Activated naive CD8-positive, alpha-beta T cell treated with anti-CD3 and anti-CD28 coated beads, Interleukin-2, amount 10 ng/mL, durations not matched to agents 7 days and 5 days (primary cell): ENCODE measurements at regions of chr16 and their contacts with region 1.

Region 1: DNA sequence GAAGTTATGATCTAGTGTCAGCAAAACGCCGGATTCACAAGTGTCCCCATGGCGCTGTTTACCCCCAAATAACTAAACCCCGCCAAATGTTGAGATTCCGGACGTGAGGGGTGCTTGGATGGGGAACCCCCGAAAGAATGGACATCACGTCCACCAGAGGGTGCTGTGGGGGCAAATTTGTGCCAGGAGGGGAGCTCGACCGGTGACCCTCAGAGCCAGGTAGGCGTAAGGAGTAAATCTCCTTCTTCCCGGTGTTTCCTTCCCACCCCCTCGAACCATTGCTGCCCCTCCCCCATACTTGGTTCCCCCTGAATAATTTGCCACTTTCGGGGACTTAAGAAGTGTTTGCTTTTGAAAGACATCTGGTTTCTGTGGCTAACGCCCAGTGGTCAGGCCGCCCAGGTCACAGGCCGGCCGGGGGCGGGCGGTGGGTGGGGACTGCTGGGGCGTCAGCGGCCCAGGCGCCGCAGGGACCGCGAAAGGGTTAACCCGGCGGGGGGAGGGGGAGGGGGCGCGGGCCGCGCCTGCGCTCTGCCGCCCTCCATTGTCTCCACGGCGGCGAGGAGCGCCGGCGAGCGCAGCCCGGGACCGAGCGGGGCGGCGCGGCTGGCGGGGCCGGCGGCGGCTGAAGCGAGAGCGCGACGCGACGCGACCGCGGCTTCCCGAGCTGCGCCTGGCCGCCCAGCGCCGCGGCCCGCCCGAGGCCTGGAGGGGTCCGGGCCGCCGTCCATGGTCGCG is at the start of gene ZNRF1:
- DNase-seq: peak; percentile 81
- ATAC-seq: peak; percentile 85
- H3K4me3 Mint-ChIP-seq: peak within 1 kb of the TSS; percentile 81
- H3K27ac Mint-ChIP-seq: peak within 1 kb of the TSS; percentile 74
- H3K4me1 Mint-ChIP-seq: peaks cover 15% of the 10 kb centered on the region
- H3K27me3 Mint-ChIP-seq: peaks cover 25% of the 10 kb centered on the region
- total RNA-seq, gene ZNRF1: 8.2 to 9.0 TPM

Region 2: GRCh38 chr16:74984535-74985296 is 13.9 kb before region 1 on chr16 and contains the start of gene WDR59:
- POLR2A ChIA-PET with region 1: interaction called, 10 read pairs
- DNase-seq: peak; percentile 92
- ATAC-seq: peak; percentile 100
- H3K4me3 Mint-ChIP-seq: peak within 1 kb of the TSS; percentile 96
- H3K27ac Mint-ChIP-seq: peak within 1 kb of the TSS; percentile 89
- H3K4me1 Mint-ChIP-seq: peaks cover 10% of the 10 kb centered on the region
- H3K27me3 Mint-ChIP-seq: peaks cover 2% of the 10 kb centered on the region
- total RNA-seq, gene WDR59: 80.5 to 81.2 TPM

Region 3: GRCh38 chr16:75043175-75043895 is 44.7 kb after region 1 on chr16:
- POLR2A ChIA-PET with region 1: no interaction called
- DNase-seq: no peak
- ATAC-seq: no peak
- H3K4me3 Mint-ChIP-seq: no peak overlapping the region
- H3K27ac Mint-ChIP-seq: no peak overlapping the region
- H3K4me1 Mint-ChIP-seq: peaks cover 1% of the 10 kb centered on the region
- H3K27me3 Mint-ChIP-seq: no peaks in the 10 kb centered on the region

Region 4: DNA sequence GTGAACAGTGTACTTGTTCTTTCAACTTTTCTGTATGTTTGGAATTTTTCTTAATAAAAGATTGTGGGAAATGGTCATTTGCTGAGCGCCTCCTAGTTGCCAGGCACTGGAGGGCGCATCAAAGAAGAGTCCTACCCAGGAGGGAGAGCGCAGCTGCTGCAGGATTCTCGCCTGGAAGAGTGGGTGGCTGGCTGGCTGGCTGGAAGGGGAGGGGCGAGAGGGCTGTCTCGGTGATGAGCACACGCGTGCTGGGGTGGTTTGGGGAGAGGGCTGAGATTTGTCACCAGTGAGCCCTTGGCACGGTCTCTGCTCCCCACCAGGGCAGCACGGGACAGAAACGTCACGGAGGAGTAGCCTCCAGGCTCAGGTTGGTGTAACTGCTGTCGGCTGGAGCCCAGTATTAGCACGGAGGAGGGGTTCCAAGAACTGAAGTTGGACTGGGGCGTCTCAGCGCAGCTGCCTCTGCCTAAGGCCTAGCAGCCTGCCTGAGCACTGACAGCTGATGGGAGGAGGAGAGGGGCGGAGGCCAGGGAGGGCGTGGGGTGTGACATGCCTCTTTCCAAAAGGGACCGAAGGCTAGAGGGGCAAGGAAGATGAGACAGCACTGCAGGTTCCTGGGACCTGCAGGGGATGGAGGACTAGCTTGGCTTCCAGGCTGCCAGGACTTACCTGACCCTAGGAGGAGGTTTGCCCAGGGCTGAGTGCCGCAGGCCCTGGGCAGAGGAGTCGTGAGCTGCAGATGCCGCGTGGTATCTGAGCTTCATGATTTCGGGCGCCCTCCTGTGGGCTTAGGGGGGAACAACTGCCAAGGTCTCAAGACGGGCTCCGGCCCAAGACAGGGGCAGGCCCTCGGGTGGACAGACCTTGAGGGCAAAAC is 112.2 kb after region 1 on chr16:
- POLR2A ChIA-PET with region 1: interaction called, 45 read pairs
- DNase-seq: peak; percentile 85
- ATAC-seq: peak; percentile 78
- H3K4me3 Mint-ChIP-seq: peak overlapping the region; percentile 40
- H3K27ac Mint-ChIP-seq: peak overlapping the region; percentile 54
- H3K4me1 Mint-ChIP-seq: peaks cover 35% of the 10 kb centered on the region
- H3K27me3 Mint-ChIP-seq: peaks cover 9% of the 10 kb centered on the region